Activated CD4-positive, alpha-beta memory T cell treated with anti-CD3 and anti-CD28 coated beads for 36 hours (primary cell): ENCODE measurements at regions of chr14 and their contacts with region 1.

Region 1: GRCh38 chr14:50860478-50861086 is 11.3 kb upstream of the ABHD12B start:
- DNase-seq: peak; percentile 91
- H3K4me3 Mint-ChIP-seq: peak overlapping the region; percentile 80
- H3K27ac Mint-ChIP-seq: no peak overlapping the region
- H3K4me1 Mint-ChIP-seq: peaks cover 11% of the 10 kb centered on the region
- H3K27me3 Mint-ChIP-seq: no peaks in the 10 kb centered on the region

Region 2: GRCh38 chr14:50542941-50543418 is 317.6 kb before region 1 on chr14:
- CTCF ChIA-PET with region 1: interaction called, 34 read pairs
- POLR2A ChIA-PET with region 1: no interaction called
- intact Hi-C with region 1: loop called (anchors 1 kb)
- DNase-seq: peak; percentile 20
- H3K4me3 Mint-ChIP-seq: no peak overlapping the region
- H3K27ac Mint-ChIP-seq: no peak overlapping the region
- H3K4me1 Mint-ChIP-seq: peaks cover 9% of the 10 kb centered on the region
- H3K27me3 Mint-ChIP-seq: no peaks in the 10 kb centered on the region

Region 3: GRCh38 chr14:50619556-50620141 is 240.9 kb before region 1 on chr14:
- CTCF ChIA-PET with region 1: interaction called, 9 read pairs
- POLR2A ChIA-PET with region 1: no interaction called
- intact Hi-C with region 1: loop called (anchors 5 kb)
- DNase-seq: no peak
- H3K4me3 Mint-ChIP-seq: no peak overlapping the region
- H3K27ac Mint-ChIP-seq: no peak overlapping the region
- H3K4me1 Mint-ChIP-seq: peaks cover 3% of the 10 kb centered on the region
- H3K27me3 Mint-ChIP-seq: no peaks in the 10 kb centered on the region

Region 4: GRCh38 chr14:50762001-50762930 is 98.3 kb before region 1 on chr14:
- CTCF ChIA-PET with region 1: interaction called, 14 read pairs
- POLR2A ChIA-PET with region 1: interaction called, 6 read pairs
- intact Hi-C with region 1: no loop called
- DNase-seq: peak; percentile 77
- H3K4me3 Mint-ChIP-seq: no peak overlapping the region
- H3K27ac Mint-ChIP-seq: peak overlapping the region; percentile 24
- H3K4me1 Mint-ChIP-seq: peaks cover 25% of the 10 kb centered on the region
- H3K27me3 Mint-ChIP-seq: no peaks in the 10 kb centered on the region

Region 5: DNA sequence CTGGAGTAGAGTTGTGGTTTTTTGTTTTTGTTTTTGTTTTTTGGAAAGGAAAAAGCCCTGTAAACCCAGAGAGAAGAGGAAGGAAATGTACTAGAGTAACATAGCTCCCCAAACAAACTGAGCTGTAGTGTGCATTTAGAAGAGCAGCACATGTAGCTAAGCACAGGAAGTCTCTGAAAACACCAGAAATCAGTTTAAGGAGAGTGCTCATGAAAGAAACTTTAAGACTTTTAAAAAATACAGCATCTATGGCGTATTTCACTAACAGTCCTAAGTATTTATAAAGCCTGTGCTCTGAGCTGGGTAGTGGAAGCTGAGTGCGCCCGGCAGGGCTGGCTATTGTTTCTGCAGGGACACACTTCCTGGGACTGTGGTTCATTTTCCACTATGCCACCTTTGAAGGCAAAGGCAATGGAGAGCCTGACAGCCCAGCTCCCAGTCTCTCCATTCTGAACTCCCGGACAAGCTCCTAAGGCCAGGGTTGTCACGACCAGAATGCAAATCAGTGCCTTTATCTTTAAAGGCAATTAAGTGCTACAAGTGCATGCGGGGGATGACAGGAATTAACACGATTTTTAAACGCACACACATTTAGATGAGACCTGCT is 75.0 kb before region 1 on chr14:
- CTCF ChIA-PET with region 1: interaction called, 27 read pairs
- POLR2A ChIA-PET with region 1: interaction called, 3 read pairs
- intact Hi-C with region 1: loop called (anchors 1 kb)
- DNase-seq: no peak
- H3K4me3 Mint-ChIP-seq: no peak overlapping the region
- H3K27ac Mint-ChIP-seq: no peak overlapping the region
- H3K4me1 Mint-ChIP-seq: peaks cover 55% of the 10 kb centered on the region
- H3K27me3 Mint-ChIP-seq: no peaks in the 10 kb centered on the region

Region 6: GRCh38 chr14:50823051-50823761 is 37.4 kb before region 1 on chr14:
- CTCF ChIA-PET with region 1: interaction called, 25 read pairs
- POLR2A ChIA-PET with region 1: no interaction called
- intact Hi-C with region 1: no loop called
- DNase-seq: no peak
- H3K4me3 Mint-ChIP-seq: peak overlapping the region; percentile 21
- H3K27ac Mint-ChIP-seq: peak overlapping the region; percentile 70
- H3K4me1 Mint-ChIP-seq: peaks cover 77% of the 10 kb centered on the region
- H3K27me3 Mint-ChIP-seq: no peaks in the 10 kb centered on the region

Region 7: GRCh38 chr14:50846226-50846880 is 14.2 kb before region 1 on chr14:
- CTCF ChIA-PET with region 1: interaction called, 18 read pairs
- POLR2A ChIA-PET with region 1: no interaction called
- intact Hi-C with region 1: no loop called
- DNase-seq: no peak
- H3K4me3 Mint-ChIP-seq: no peak overlapping the region
- H3K27ac Mint-ChIP-seq: no peak overlapping the region
- H3K4me1 Mint-ChIP-seq: no peaks in the 10 kb centered on the region
- H3K27me3 Mint-ChIP-seq: no peaks in the 10 kb centered on the region

Region 8: GRCh38 chr14:50943261-50943942 is 82.8 kb after region 1 on chr14:
- CTCF ChIA-PET with region 1: no interaction called
- POLR2A ChIA-PET with region 1: no interaction called
- intact Hi-C with region 1: no loop called
- DNase-seq: peak; percentile 13
- H3K4me3 Mint-ChIP-seq: peak overlapping the region; percentile 37
- H3K27ac Mint-ChIP-seq: no peak overlapping the region
- H3K4me1 Mint-ChIP-seq: peaks cover 10% of the 10 kb centered on the region
- H3K27me3 Mint-ChIP-seq: peaks cover 31% of the 10 kb centered on the region